ENCODE measurements at regions of chr1 and their contacts with region 1.

Region 1: DNA sequence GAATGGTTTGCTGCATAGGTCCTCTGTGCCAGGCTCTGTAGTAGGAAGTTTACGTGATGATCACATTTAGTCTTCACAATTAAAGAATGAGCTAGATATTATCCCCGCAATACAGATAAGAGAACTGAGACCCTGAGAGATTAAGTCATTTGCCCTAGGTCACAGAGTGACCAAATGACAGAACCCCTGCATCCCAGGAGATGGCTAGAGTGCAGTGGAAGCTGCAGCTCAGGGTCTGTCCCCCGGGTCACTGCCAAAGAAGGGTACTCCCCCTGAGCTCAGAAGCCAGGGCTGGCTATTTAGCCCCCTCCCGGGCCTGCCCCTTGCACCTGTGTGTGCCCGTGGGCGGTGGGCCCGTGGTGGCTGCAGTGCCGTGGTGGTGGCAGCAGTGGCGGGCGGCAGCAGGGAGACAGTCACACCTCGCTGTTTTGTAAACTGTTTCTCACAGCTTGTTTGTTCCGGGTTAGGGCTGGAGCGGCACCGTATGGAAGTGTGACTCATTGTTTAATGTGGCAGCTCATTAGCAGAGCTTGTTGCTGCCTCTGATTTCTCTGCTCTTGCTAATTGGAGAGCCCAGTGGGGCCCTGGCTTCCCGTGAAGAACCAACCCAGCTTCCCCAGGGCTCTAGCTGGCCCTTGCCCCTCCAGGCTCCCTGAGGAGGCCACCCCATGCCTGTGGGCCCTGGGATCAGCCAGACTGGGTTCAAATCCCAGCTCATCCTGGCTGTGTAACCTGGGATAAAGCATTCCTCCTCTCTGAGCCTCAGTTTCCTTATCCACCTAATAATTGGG is 19.3 kb upstream of the FOXO6 start:
- DNase-seq: no peak
- H3K4me3 ChIP-seq: no peak overlapping the region
- H3K27ac ChIP-seq: no peak overlapping the region
- H3K4me1 ChIP-seq: peaks cover 0 to 7% (median 2%) of the 10 kb centered on the region in 4 experiments; a peak in 3 of 7 replicates
- H3K27me3 ChIP-seq: no peaks in the 10 kb centered on the region; a peak in 2 of 7 replicates
- CTCF ChIP-seq: no peak
- EP300 ChIP-seq: no peak
- POLR2A ChIP-seq: no peak
- RAD21 ChIP-seq: no peak

Region 2: DNA sequence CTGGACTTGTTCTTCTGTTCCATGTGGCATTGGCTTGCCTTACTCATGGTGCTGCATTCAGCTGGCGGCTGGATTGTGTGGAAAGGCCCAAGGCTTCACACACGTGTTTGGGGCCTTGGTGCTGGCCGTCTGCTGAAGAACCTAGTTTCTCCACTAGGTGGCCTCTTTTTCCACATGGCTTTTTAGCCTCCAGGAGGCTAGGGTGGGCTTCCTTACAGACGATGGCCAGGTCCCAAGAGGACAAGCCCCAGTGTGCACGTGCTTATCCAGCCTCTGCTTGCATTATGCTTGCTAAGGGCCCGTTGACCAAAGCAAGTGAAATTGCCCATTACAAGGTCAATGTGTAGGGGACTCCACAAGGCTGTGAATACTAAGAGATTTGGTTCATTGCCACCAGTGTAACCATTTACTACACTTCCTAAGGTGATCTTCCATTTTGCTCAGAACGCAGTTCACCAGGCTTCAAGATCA is 28.3 kb before region 1 on chr1:
- CTCF ChIA-PET with region 1: interaction called, 24 read pairs
- POLR2A ChIA-PET with region 1: no interaction called
- DNase-seq: peak; percentile 29 to 70
- H3K4me3 ChIP-seq: no peak overlapping the region
- H3K27ac ChIP-seq: no peak overlapping the region
- H3K4me1 ChIP-seq: peaks cover 0 to 14% (median 2%) of the 10 kb centered on the region in 4 experiments; a peak in 4 of 7 replicates
- H3K27me3 ChIP-seq: peaks cover 0 to 2% (median 0%) of the 10 kb centered on the region in 4 experiments; a peak in 1 of 7 replicates
- CTCF ChIP-seq: peak; percentile 64 to 87 (median 81)
- EP300 ChIP-seq: no peak
- POLR2A ChIP-seq: no peak
- RAD21 ChIP-seq: peak; percentile 55 to 73

Region 3: GRCh38 chr1:41322835-41323627 is 18.9 kb before region 1 on chr1:
- CTCF ChIA-PET with region 1: interaction called, 64 read pairs
- POLR2A ChIA-PET with region 1: no interaction called
- DNase-seq: peak; percentile 36 to 80
- H3K4me3 ChIP-seq: no peak overlapping the region
- H3K27ac ChIP-seq: no peak overlapping the region
- H3K4me1 ChIP-seq: peaks cover 0 to 10% (median 6%) of the 10 kb centered on the region in 4 experiments; a peak in 6 of 7 replicates
- H3K27me3 ChIP-seq: no peaks in the 10 kb centered on the region; a peak in 1 of 7 replicates
- CTCF ChIP-seq: peak; percentile 87 to 93 (median 89)
- EP300 ChIP-seq: no peak
- POLR2A ChIP-seq: no peak
- RAD21 ChIP-seq: peak; percentile 94 to 96

Region 4: GRCh38 chr1:41353726-41354125 is 11.8 kb after region 1 on chr1:
- CTCF ChIA-PET with region 1: interaction called, 18 read pairs
- POLR2A ChIA-PET with region 1: interaction called, 3 read pairs
- DNase-seq: peak in 1 of 2 experiments; percentile 26
- H3K4me3 ChIP-seq: no peak overlapping the region
- H3K27ac ChIP-seq: no peak overlapping the region
- H3K4me1 ChIP-seq: peaks cover 0 to 16% (median 13%) of the 10 kb centered on the region in 4 experiments; a peak in 5 of 7 replicates
- H3K27me3 ChIP-seq: peaks cover 0 to 7% (median 3%) of the 10 kb centered on the region in 4 experiments; a peak in 3 of 7 replicates
- CTCF ChIP-seq: no peak
- EP300 ChIP-seq: no peak
- POLR2A ChIP-seq: no peak
- RAD21 ChIP-seq: no peak

Region 5: GRCh38 chr1:41423511-41424221 is 81.7 kb after region 1 on chr1:
- CTCF ChIA-PET with region 1: interaction called, 33 read pairs
- POLR2A ChIA-PET with region 1: no interaction called
- DNase-seq: peak in 1 of 2 experiments; percentile 79
- H3K4me3 ChIP-seq: no peak overlapping the region
- H3K27ac ChIP-seq: no peak overlapping the region
- H3K4me1 ChIP-seq: peaks cover 0 to 7% (median 2%) of the 10 kb centered on the region in 4 experiments; a peak in 4 of 7 replicates
- H3K27me3 ChIP-seq: no peaks in the 10 kb centered on the region
- CTCF ChIP-seq: peak; percentile 62 to 89 (median 65)
- EP300 ChIP-seq: no peak
- POLR2A ChIP-seq: no peak
- RAD21 ChIP-seq: peak; percentile 58 to 72